Common myeloid progenitor, CD34-positive (primary cell): ENCODE measurements at regions of chr1 and their contacts with region 1.

Region 1: GRCh38 chr1:109493805-109494539 is at the start of gene CYB561D1:
- DNase-seq: peak; percentile 84 to 92 (median 92)
- H3K4me3 ChIP-seq: peak within 1 kb of the TSS; percentile 89 to 99 (median 94)
- H3K27ac ChIP-seq: peak within 1 kb of the TSS in 1 of 2 experiments; percentile 52
- H3K4me1 ChIP-seq: peaks cover 0 to 16% (median 10%) of the 10 kb centered on the region in 4 experiments
- H3K27me3 ChIP-seq: no peaks in the 10 kb centered on the region

Region 2: GRCh38 chr1:109483672-109484518 is 10.1 kb before region 1 on chr1 and contains the start of gene ATXN7L2:
- CTCF ChIA-PET with region 1: interaction called, 232 read pairs
- POLR2A ChIA-PET with region 1: no interaction called
- DNase-seq: peak; percentile 88 to 94 (median 94)
- H3K4me3 ChIP-seq: peak within 1 kb of the TSS; percentile 54 to 90 (median 77)
- H3K27ac ChIP-seq: peak within 1 kb of the TSS; percentile 87 to 94
- H3K4me1 ChIP-seq: peaks cover 0 to 20% (median 16%) of the 10 kb centered on the region in 4 experiments
- H3K27me3 ChIP-seq: peaks cover 0 to 30% (median 14%) of the 10 kb centered on the region in 5 experiments

Region 3: GRCh38 chr1:109509176-109510134 is 15.5 kb after region 1 on chr1 and contains the start of gene AMIGO1:
- CTCF ChIA-PET with region 1: interaction called, 232 read pairs
- POLR2A ChIA-PET with region 1: interaction called, 7 read pairs
- DNase-seq: peak; percentile 37 to 68 (median 54)
- H3K4me3 ChIP-seq: peak within 1 kb of the TSS; percentile 23 to 80 (median 68)
- H3K27ac ChIP-seq: no peak within 1 kb of the TSS
- H3K4me1 ChIP-seq: peaks cover 0 to 14% (median 11%) of the 10 kb centered on the region in 4 experiments
- H3K27me3 ChIP-seq: peaks cover 0 to 22% (median 0%) of the 10 kb centered on the region in 5 experiments

Region 4: GRCh38 chr1:109516872-109517271 is 22.9 kb after region 1 on chr1:
- CTCF ChIA-PET with region 1: interaction called, 1,203 read pairs
- POLR2A ChIA-PET with region 1: interaction called, 3 read pairs
- DNase-seq: no peak
- H3K4me3 ChIP-seq: no peak overlapping the region
- H3K27ac ChIP-seq: no peak overlapping the region
- H3K4me1 ChIP-seq: no peaks in the 10 kb centered on the region
- H3K27me3 ChIP-seq: peaks cover 0 to 11% (median 0%) of the 10 kb centered on the region in 5 experiments

Region 5: GRCh38 chr1:109691762-109692161 is 197.8 kb after region 1 on chr1:
- CTCF ChIA-PET with region 1: no interaction called
- POLR2A ChIA-PET with region 1: no interaction called
- DNase-seq: no peak
- H3K4me3 ChIP-seq: no peak overlapping the region
- H3K27ac ChIP-seq: no peak overlapping the region
- H3K4me1 ChIP-seq: peaks cover 0 to 14% (median 1%) of the 10 kb centered on the region in 4 experiments
- H3K27me3 ChIP-seq: no peaks in the 10 kb centered on the region